CD8-positive, alpha-beta memory T cell (primary cell): ENCODE measurements at regions of chr20 and their contacts with region 1.

Region 1: GRCh38 chr20:17617551-17618223 is 47.8 kb downstream of the DSTN start:
- DNase-seq: peak in 4 of 5 donors; percentile 34 to 60 (median 38)
- H3K4me3 ChIP-seq: no peak overlapping the region
- H3K4me3 Mint-ChIP-seq: no peak overlapping the region
- H3K27ac ChIP-seq: no peak overlapping the region
- H3K27ac Mint-ChIP-seq: peak overlapping the region in 5 of 8 donors; percentile 29 to 59 (median 52)
- H3K4me1 ChIP-seq: peaks cover 2% of the 10 kb centered on the region
- H3K4me1 Mint-ChIP-seq: peaks cover 4 to 11% (median 9%) of the 10 kb centered on the region in 3 donors
- H3K27me3 ChIP-seq: no peaks in the 10 kb centered on the region
- H3K27me3 Mint-ChIP-seq: no peaks in the 10 kb centered on the region

Region 2: DNA sequence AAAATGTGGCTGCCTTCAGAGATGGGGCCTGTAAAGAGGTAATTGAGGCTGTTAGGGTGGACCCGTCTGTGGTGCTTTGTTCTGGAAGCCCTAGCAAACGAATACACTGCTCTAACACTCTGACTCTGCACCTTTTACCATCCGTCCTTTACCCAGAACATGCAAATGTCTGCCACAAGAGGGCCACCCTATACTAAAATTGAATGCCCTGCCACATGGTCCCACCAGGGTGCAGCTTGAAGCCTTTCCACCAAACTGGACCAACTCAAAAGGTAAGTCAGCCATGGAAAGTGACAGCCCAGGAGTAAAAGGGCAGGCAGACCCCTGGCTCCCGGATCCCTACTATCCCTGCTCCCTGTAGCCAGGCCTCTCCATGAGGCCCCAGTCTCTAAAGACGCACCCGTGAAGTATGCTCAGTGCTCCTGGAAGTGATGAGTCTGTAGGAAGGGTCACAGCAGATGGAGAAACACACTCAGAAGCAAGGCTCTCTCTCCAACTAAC is 80.7 kb before region 1 on chr20:
- CTCF ChIA-PET with region 1: interaction called, 19 read pairs
- POLR2A ChIA-PET with region 1: no interaction called
- DNase-seq: peak; percentile 43 to 75 (median 60)
- H3K4me3 ChIP-seq: no peak overlapping the region
- H3K4me3 Mint-ChIP-seq: no peak overlapping the region
- H3K27ac ChIP-seq: no peak overlapping the region
- H3K27ac Mint-ChIP-seq: peak overlapping the region in 2 of 8 donors; percentile 24 to 73
- H3K4me1 ChIP-seq: peaks cover 7% of the 10 kb centered on the region
- H3K4me1 Mint-ChIP-seq: peaks cover 6 to 13% (median 6%) of the 10 kb centered on the region in 3 donors
- H3K27me3 ChIP-seq: peaks cover 8% of the 10 kb centered on the region
- H3K27me3 Mint-ChIP-seq: peaks cover 15 to 37% of the 10 kb centered on the region in 2 donors